GM13977 (cell line): ENCODE measurements at regions of chr10 and their contacts with region 1.

Region 1: DNA sequence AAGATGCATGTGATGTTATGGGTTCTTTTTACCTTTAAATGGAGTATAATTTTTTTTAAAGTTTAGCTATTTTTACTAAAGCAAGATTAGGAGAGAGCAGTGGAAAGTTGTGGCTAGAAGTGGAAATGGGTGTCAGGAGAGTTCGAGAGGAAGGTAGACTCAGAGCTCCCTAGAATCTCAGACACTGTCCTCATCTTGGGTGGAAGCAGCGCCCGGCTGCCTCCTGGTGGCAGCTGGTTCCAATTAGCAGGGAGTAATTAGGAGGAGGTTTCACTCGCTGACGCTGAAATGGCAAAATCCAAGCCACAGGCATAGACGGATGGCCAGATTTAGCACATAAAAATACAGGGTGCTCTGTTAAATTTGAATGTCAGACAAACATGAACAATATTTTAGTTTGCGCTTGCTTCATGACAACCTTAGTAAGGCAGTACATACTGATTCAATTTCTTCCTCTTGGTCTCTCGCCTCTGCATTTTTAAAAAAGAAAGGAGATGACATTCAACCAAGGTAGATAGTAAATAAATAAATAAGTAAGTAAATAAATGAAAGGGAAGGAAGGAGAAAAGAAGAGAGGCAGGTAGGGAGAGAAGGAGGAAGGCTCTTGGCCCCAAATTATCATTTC is 58.5 kb downstream of the LGI1 start:
- DNase-seq: peak; percentile 31
- CTCF ChIP-seq: peak; percentile 70

Region 2: DNA sequence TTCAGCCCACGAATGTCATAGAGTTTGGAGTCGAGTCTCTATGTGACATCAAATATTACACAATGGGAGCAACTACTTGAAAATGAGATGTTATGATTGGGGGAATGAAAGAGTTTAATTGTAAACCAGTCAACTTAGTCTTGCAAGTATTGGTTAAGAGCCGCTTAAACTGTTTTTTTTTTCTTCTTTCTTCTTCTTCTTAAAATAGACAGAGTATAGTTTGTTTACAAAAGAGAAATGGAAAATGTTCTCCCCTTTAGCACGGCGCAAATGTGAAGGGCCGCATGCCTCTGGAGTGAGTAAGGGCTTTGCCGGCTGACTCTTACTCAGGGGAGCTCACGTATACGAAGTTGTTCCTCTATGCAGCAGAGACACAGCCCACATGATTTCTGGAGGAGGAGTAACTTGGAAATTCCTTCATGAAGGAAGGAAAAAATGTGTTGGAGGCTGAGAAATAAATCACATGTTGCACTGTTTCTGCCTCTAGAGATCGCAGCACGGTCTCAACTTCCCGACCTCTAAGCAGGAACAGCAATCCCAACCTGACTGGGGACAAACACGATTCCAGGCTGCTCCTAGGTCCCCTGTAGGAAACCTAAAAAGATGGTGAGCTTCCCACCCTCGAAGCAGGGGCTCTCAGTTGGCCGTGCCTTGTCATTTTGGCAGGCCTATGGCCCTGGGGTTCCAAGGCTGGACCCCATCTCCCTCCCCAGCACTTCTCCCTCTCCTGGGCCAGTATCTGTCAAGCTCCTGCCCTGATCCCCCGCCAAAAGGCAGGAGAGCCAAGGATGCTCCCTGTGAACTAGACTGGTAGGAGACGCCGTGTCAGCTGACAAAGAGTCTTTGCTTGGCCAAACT is 378.9 kb before region 1 on chr10:
- in situ Hi-C with region 1: no loop called
- DNase-seq: no peak
- CTCF ChIP-seq: no peak

Region 3: GRCh38 chr10:93554760-93555432 is 261.3 kb before region 1 on chr10:
- in situ Hi-C with region 1: loop called (anchors 25 kb)
- DNase-seq: peak; percentile 72
- CTCF ChIP-seq: peak; percentile 77

Region 4: DNA sequence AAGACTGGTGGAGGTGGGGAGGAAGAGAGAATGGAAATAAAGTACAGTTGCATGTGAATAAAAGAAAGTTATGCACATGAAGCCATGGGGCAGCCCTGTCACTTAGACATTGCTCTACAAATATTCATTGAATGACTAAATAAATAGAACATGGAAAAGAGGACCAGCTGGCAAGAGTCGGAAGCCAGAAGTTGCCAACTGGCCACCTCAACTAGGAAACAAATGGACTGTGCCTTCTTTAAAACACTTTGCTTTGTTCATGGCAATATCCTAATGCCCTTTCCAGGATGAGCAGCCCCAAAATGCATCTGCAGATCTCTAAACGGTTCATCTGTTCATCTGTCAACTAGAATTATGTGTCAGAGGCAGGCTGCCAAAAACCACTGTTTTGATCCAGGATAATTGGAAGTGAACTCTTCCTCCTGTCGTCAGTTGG is 389.2 kb after region 1 on chr10:
- in situ Hi-C with region 1: no loop called
- DNase-seq: no peak
- CTCF ChIP-seq: no peak